Left cardiac atrium (tissue), 4 donors: ENCODE measurements at regions of chr6 and their contacts with region 1.

Region 1: GRCh38 chr6:31399589-31400466 is 3.6 kb upstream of the MICA start:
- DNase-seq: peak; percentile 96
- ATAC-seq: peak; percentile 85 to 87

Region 2: GRCh38 chr6:31441365-31442267 is 41.8 kb after region 1 on chr6:
- intact Hi-C with region 1: loop called (anchors 2 kb)
- DNase-seq: peak; percentile 89
- ATAC-seq: peak; percentile 97 to 98